ENCODE measurements at regions of chr11 and their contacts with region 1.

Region 1: DNA sequence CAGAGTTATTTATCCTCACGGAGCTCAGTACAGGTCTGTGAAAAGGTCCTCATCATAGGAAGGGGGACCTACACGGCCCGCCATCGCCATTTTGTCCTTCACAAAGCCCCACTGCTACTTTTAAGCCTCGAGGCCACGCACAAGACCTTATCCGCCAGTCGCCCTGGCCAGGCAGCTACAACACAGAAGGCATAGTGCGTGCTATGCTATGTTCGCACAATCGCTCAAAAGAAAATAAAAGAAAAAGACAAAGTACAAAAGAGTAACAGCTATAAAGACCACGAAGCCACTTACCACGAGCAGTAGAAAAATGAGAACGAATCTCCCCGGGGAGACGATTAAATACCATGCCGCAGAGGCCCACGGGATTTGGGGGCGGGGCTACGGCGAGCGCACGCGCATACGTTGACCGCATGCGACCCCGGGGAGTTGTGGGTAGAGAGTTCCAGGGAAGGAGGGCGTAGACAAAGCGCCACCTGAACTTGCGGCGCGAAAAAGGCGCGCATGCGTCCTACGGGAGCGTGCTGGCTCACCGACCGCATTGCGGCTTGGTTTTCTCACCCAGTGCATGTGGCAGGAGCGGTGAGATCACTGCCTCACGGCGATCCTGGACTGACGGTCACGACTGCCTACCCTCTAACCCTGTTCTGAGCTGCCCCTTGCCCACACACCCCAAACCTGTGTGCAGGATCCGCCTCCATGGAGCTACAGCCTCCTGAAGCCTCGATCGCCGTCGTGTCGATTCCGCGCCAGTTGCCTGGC is 16.4 kb upstream of the WDR74 start:
- DNase-seq: peak; percentile 90 to 99 (median 95)

Region 2: DNA sequence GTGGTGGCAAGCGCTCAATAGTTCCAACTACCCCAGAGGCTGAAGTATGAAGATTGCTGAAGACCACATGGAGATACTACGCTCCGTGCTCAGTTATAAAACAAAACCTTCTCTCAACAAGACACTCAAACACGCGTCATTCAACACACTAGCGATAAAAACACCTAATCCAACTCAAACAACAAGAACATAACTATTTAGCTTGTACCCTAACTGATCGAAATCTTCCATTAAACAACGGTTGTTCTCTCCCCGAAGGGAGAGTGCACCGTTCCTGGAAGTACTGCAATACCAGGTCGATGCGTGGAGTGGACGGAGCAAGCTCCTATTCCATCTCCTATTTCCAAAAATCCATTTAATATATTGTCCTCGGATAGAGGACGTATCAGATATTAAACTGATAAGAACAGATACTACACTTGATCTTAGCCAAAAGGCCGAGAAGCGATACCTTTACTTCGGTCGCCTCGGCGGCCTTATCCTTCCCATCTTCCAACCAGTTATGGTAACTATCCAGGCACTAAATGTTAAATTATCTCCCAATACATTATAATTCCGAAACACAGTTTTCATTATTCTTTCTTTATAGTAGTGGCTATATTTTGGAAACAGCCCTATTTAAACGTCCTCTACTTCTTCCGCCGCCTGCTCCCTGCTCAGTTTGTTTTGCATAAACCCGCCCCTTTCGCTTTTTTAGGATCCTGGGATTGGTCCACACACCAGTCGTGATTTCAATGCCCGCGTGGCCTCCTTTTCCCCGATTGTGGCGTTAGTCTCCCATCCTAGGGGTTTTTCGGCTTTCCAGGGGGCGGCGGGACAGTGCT is 14.2 kb before region 1 on chr11:
- intact Hi-C with region 1: loop called (anchors 1 kb)
- DNase-seq: peak; percentile 67 to 97 (median 82)